ENCODE measurements at regions of chr6 and their contacts with region 1.

Region 1: DNA sequence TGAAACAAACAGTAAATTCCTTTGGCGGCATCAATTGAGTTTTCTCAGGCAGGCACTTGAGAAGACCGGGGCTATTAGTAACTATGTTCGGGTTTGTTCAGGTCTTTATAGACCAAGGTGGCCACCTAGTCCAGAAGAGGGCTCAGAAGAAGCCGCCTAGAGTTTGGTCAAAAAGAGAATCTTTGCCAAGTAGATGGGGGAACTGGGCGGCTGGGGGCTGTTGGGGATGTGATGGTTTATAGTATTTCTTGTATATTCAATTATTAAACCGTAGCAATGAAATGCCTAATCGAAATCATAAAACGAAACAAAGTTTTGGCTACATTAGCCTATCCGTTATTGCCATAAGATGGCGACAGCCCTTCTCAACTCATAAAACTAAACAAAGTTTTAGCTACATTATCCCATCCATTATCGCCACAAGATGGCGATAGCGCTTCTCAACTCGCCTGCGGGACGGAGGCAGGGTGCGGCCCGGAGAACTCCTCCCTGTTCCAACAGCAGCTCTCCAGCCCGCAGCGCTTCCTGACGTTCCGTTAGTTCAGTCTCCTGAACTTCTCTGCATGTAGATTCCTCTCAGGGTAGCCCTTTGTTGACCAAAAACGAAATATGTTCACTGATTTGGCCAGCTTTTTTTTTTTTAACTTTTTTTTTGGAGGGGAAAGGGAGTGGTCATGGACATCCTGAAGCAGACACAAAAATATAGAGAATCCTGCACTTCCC is 120.5 kb upstream of the PRSS16 start:
- DNase-seq: peak; percentile 78 to 86 (median 83)
- H3K4me3 ChIP-seq: peak overlapping the region; percentile 13 to 34
- H3K4me3 Mint-ChIP-seq: peak overlapping the region; percentile 71 to 87 (median 80)
- H3K27ac ChIP-seq: peak overlapping the region; percentile 37
- H3K27ac Mint-ChIP-seq: peak overlapping the region; percentile 79 to 91 (median 89)
- H3K4me1 ChIP-seq: peaks cover 16% of the 10 kb centered on the region
- H3K4me1 Mint-ChIP-seq: peaks cover 14 to 16% (median 16%) of the 10 kb centered on the region in 4 donors
- H3K27me3 ChIP-seq: no peaks in the 10 kb centered on the region
- H3K27me3 Mint-ChIP-seq: no peaks in the 10 kb centered on the region

Region 2: DNA sequence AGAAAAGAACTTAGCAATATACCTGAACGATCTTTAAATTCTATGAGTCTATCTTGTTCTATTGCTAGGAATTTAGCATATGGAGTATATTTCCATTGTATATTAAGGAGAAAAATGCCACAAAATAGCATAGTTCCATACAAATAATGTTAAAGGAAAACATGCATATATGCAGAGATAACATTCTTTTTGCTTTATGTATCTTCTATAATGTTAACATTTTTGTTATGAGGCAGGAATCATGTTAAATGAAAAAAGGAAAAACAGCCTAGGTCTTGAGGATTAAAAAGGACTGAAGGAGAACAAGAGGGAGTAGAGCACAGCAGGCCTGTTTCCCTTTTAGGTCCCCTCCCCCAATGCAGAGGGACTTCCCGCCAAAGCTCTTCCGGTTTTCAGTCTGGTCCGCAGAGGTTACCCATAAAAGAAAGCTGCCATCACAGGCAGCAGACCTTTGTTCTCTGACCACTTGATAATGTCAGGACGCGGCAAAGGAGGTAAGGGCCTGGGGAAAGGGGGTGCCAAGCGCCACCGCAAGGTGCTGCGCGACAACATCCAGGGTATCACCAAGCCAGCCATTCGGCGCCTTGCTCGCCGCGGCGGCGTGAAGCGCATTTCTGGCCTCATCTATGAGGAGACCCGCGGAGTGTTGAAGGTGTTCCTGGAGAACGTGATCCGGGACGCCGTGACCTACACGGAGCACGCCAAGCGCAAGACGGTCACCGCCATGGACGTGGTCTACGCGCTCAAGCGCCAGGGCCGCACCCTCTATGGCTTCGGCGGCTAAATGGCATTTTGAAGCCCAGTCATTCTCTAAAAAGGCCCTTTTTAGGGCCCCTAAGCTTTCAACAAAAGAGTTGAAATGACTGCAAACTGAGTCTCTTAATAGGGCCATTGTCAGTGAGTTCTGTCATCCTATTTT is 12.1 kb after region 1 on chr6:
- CTCF ChIA-PET with region 1: interaction called, 64 read pairs
- POLR2A ChIA-PET with region 1: interaction called, 863 read pairs
- intact Hi-C with region 1: loop called (anchors 1 kb)
- DNase-seq: peak; percentile 64 to 79 (median 69)
- H3K4me3 ChIP-seq: peak overlapping the region; percentile 58 to 73
- H3K4me3 Mint-ChIP-seq: peak overlapping the region; percentile 93 to 98 (median 96)
- H3K27ac ChIP-seq: peak overlapping the region; percentile 94
- H3K27ac Mint-ChIP-seq: peak overlapping the region; percentile 98 to 99 (median 99)
- H3K4me1 ChIP-seq: peaks cover 45% of the 10 kb centered on the region
- H3K4me1 Mint-ChIP-seq: peaks cover 30 to 66% (median 40%) of the 10 kb centered on the region in 4 donors
- H3K27me3 ChIP-seq: no peaks in the 10 kb centered on the region
- H3K27me3 Mint-ChIP-seq: no peaks in the 10 kb centered on the region

Region 3: DNA sequence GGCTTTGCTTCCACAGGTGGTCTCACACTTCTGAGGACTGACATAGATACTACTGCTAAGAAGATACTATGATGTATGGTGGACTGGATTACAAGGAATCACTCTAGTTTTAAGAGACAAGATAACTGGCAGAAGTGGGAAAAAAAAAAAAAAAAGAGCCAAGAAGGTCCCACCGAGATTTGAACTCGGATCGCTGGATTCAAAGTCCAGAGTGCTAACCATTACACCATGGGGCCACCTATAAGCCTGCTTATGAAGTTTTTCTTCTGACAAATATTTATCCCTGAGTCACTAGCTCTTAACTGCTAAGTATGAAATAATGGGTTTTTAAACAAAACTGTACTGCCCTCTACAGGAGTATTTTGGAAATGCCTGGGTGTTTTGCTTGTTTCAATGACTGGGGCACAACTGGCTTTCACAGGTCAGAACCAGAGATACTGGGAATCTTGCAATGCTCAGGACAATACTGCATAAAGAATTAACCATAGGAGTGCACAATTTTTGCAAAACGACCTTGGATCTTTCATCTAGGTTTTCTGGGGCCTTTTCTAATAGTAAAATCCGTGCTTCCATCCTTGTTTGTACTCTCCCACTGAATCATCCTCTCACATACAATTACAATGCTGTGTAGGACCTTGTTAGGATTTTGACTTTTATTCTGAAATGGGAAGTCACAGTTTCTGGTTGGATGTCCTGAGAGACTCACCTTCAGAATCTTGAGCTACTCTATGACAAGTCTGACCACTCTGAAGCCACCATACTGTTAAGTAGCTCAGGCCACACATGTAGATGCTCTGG is 668.9 kb after region 1 on chr6:
- CTCF ChIA-PET with region 1: interaction called, 30 read pairs
- POLR2A ChIA-PET with region 1: no interaction called
- intact Hi-C with region 1: loop called (anchors 1 kb)
- DNase-seq: peak; percentile 75 to 82 (median 80)
- H3K4me3 ChIP-seq: no peak overlapping the region
- H3K4me3 Mint-ChIP-seq: peak overlapping the region in 1 of 8 donors; percentile 16
- H3K27ac ChIP-seq: no peak overlapping the region
- H3K27ac Mint-ChIP-seq: peak overlapping the region in 5 of 7 donors; percentile 6 to 91 (median 35)
- H3K4me1 ChIP-seq: peaks cover 21% of the 10 kb centered on the region
- H3K4me1 Mint-ChIP-seq: peaks cover 17 to 29% (median 21%) of the 10 kb centered on the region in 4 donors
- H3K27me3 ChIP-seq: peaks cover 6% of the 10 kb centered on the region
- H3K27me3 Mint-ChIP-seq: peaks cover 6 to 13% of the 10 kb centered on the region in 2 donors

Region 4: GRCh38 chr6:28506807-28507475 is 1380.0 kb after region 1 on chr6:
- CTCF ChIA-PET with region 1: no interaction called
- POLR2A ChIA-PET with region 1: no interaction called
- intact Hi-C with region 1: no loop called
- DNase-seq: peak in 1 of 5 donors; percentile 17
- H3K4me3 ChIP-seq: no peak overlapping the region
- H3K4me3 Mint-ChIP-seq: peak overlapping the region in 7 of 8 donors; percentile 2 to 61 (median 5)
- H3K27ac ChIP-seq: no peak overlapping the region
- H3K27ac Mint-ChIP-seq: peak overlapping the region in 6 of 7 donors; percentile 6 to 72 (median 64)
- H3K4me1 ChIP-seq: peaks cover 14% of the 10 kb centered on the region
- H3K4me1 Mint-ChIP-seq: peaks cover 9 to 18% (median 15%) of the 10 kb centered on the region in 4 donors
- H3K27me3 ChIP-seq: no peaks in the 10 kb centered on the region
- H3K27me3 Mint-ChIP-seq: peaks cover 7 to 16% of the 10 kb centered on the region in 2 donors

Measured in CD4-positive, alpha-beta memory T cell (primary cell).